Activated CD4-positive, alpha-beta T cell treated with anti-CD3 and anti-CD28 coated beads for 36 hours (primary cell): ENCODE measurements at regions of chr9 and their contacts with region 1.

Region 1: GRCh38 chr9:75148561-75148960 is 60.2 kb downstream of the OSTF1 start:
- DNase-seq: peak; percentile 28
- ATAC-seq: peak; percentile 58
- H3K4me3 Mint-ChIP-seq: no peak overlapping the region
- H3K27ac Mint-ChIP-seq: peak overlapping the region; percentile 89
- H3K4me1 Mint-ChIP-seq: peaks cover 71% of the 10 kb centered on the region
- H3K27me3 Mint-ChIP-seq: no peaks in the 10 kb centered on the region

Region 2: DNA sequence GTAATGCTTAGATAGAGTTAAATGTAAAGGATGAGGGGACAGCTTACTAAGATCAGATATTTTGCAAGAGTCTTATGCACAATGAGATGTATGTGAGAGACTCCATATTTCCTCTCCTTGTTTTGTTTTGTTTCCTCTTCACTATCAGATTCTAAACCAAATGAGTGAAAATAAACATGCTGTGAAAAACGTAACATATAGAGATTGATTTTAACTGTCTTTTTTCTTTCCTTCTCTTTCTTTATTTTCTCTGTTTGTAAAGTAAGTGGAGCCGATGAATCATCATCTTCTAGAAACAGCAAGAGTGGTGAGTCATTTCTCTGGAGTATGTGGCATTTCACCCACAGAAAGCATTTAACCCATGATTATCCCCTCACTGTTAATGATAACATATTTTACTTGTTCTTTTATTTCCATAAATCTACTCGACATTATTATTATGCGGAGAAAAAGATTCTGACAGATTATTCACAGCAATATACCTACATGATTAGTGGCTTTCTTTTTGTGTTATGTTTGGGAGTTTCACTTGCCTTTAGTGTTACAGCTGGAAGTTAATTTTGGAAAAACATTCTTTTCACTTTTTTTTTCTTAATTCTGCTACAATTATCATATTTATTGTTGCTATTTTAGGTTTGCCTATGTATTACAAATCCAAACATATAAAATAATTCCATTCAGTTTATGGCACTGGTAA is 1999.0 kb before region 1 on chr9:
- CTCF ChIA-PET with region 1: no interaction called
- POLR2A ChIA-PET with region 1: interaction called, 3 read pairs
- intact Hi-C with region 1: loop called in 1 of 2 experiments (anchors 10 kb)
- DNase-seq: no peak
- ATAC-seq: peak; percentile 65
- H3K4me3 Mint-ChIP-seq: peak overlapping the region; percentile 64
- H3K27ac Mint-ChIP-seq: peak overlapping the region; percentile 81
- H3K4me1 Mint-ChIP-seq: peaks cover 61% of the 10 kb centered on the region
- H3K27me3 Mint-ChIP-seq: no peaks in the 10 kb centered on the region

Region 3: DNA sequence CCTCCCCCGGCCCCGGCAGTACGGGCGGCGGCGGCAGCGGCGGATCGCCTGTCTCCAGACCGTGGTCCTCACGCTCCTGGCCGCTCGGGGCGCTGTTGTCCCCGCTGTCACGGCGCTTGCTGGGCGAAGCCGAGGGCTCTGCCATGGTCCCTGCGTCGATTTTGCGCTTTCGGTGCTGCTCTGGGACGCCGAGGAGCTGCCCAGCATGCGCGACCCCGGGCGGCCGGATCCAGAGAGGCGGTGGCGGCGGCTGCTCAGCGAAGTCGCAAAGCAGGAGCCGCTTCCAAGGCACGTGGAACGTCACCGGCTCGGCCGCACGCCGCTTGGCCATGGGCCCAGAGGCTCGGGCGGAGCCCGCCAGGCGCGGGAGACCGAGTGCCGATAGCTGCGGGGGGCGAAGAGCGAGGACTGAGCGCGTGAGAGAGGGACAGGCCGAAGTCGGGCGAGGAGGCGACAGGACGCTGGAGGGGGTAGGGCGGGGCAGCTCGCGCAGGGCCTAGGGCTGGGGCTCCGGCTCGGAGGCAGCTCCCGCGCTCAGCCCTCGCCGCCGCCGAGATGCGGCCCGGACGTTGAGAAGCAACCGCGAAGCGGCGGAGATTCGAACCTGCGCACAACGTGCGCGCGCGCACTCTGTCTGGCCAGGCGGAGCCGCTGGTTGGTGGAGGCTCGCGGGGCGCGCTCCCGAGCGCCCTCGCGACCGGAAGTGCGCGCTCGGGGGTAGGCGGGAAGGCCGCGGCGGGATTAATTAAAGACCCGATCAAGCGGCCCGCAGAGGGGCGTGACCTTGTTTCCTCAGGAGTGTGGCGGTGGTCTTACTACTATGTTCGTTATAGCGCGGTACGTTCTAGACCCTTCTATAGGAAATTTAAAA is 196.0 kb before region 1 on chr9 and contains the start of gene C9orf40:
- CTCF ChIA-PET with region 1: interaction called, 3 read pairs
- POLR2A ChIA-PET with region 1: no interaction called
- intact Hi-C with region 1: loop called in 1 of 2 experiments (anchors 5 kb)
- DNase-seq: peak; percentile 95
- ATAC-seq: peak; percentile 93
- H3K4me3 Mint-ChIP-seq: peak within 1 kb of the TSS; percentile 93
- H3K27ac Mint-ChIP-seq: peak within 1 kb of the TSS; percentile 96
- H3K4me1 Mint-ChIP-seq: peaks cover 28% of the 10 kb centered on the region
- H3K27me3 Mint-ChIP-seq: no peaks in the 10 kb centered on the region
- total RNA-seq, gene C9orf40: 14.0 to 19.7 TPM

Region 4: GRCh38 chr9:75116306-75116705 is 32.3 kb before region 1 on chr9:
- CTCF ChIA-PET with region 1: no interaction called
- POLR2A ChIA-PET with region 1: interaction called, 6 read pairs
- intact Hi-C with region 1: loop called (anchors 1 kb)
- DNase-seq: no peak
- ATAC-seq: no peak
- H3K4me3 Mint-ChIP-seq: no peak overlapping the region
- H3K27ac Mint-ChIP-seq: no peak overlapping the region
- H3K4me1 Mint-ChIP-seq: peaks cover 66% of the 10 kb centered on the region
- H3K27me3 Mint-ChIP-seq: no peaks in the 10 kb centered on the region

Region 5: DNA sequence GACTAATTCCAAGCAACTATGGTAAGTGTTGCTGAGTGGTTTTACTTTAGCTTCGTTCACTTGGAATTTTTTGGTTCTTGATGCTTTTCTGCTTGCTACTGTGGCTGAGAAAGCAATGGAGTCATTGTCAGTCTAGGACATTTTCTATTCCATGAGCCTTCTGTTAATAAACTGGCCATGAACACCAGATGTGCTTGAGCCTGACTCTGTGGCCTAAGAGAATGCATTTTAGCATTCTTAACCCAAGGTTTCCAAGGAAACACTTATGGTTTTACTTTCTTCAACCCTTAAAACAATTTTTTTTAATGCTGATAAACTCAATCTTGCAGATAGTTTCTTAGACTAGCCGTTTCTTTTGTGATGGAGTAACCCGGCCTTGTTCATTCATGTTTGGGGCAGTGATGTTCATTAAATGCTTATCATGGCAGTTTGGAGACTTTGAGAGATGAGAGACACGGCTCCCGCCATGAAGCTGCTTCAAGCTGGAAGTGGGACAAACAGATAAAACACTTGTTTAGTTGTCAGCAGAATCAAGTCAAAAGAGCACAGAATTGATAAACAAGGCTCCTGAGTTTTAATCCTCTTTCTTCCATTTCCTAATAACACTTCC is 17.8 kb before region 1 on chr9:
- CTCF ChIA-PET with region 1: interaction called, 5 read pairs
- POLR2A ChIA-PET with region 1: interaction called, 3 read pairs
- intact Hi-C with region 1: loop called in 1 of 2 experiments (anchors 2 kb)
- DNase-seq: no peak
- ATAC-seq: no peak
- H3K4me3 Mint-ChIP-seq: no peak overlapping the region
- H3K27ac Mint-ChIP-seq: no peak overlapping the region
- H3K4me1 Mint-ChIP-seq: peaks cover 30% of the 10 kb centered on the region
- H3K27me3 Mint-ChIP-seq: no peaks in the 10 kb centered on the region

Region 6: GRCh38 chr9:76023715-76024195 is 875.2 kb after region 1 on chr9:
- CTCF ChIA-PET with region 1: no interaction called
- POLR2A ChIA-PET with region 1: no interaction called
- intact Hi-C with region 1: loop called in 1 of 2 experiments (anchors 10 kb)
- DNase-seq: peak; percentile 63
- ATAC-seq: peak; percentile 83
- H3K4me3 Mint-ChIP-seq: peak overlapping the region; percentile 56
- H3K27ac Mint-ChIP-seq: peak overlapping the region; percentile 88
- H3K4me1 Mint-ChIP-seq: peaks cover 89% of the 10 kb centered on the region
- H3K27me3 Mint-ChIP-seq: no peaks in the 10 kb centered on the region

Region 7: DNA sequence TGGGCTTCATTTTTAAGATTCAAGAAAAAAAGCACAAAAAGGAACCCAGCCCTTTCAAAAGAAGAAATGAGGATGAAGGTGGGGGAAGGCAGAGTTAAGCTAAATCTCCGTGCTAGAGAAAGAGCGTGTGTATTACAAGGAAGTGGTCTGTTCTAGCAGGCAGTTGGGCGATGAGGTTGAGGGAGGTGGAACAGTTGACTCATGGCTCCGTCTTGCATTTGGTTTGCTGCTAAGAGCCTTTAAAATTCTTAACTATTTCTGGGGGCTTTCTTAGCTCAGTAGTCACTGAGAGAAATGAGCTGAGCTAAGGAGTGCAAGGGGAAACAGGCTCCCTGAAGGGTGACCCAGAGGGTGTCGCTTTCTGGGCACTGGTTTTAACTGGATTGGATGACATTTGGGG is 1427.8 kb after region 1 on chr9:
- CTCF ChIA-PET with region 1: no interaction called
- POLR2A ChIA-PET with region 1: no interaction called
- intact Hi-C with region 1: loop called in 1 of 2 experiments (anchors 5 kb)
- DNase-seq: peak; percentile 87
- ATAC-seq: peak; percentile 94
- H3K4me3 Mint-ChIP-seq: no peak overlapping the region
- H3K27ac Mint-ChIP-seq: peak overlapping the region; percentile 48
- H3K4me1 Mint-ChIP-seq: peaks cover 16% of the 10 kb centered on the region
- H3K27me3 Mint-ChIP-seq: peaks cover 30% of the 10 kb centered on the region